Kidney (tissue), 22 donors: ENCODE measurements at regions of chr11 and their contacts with region 1.

Region 1: DNA sequence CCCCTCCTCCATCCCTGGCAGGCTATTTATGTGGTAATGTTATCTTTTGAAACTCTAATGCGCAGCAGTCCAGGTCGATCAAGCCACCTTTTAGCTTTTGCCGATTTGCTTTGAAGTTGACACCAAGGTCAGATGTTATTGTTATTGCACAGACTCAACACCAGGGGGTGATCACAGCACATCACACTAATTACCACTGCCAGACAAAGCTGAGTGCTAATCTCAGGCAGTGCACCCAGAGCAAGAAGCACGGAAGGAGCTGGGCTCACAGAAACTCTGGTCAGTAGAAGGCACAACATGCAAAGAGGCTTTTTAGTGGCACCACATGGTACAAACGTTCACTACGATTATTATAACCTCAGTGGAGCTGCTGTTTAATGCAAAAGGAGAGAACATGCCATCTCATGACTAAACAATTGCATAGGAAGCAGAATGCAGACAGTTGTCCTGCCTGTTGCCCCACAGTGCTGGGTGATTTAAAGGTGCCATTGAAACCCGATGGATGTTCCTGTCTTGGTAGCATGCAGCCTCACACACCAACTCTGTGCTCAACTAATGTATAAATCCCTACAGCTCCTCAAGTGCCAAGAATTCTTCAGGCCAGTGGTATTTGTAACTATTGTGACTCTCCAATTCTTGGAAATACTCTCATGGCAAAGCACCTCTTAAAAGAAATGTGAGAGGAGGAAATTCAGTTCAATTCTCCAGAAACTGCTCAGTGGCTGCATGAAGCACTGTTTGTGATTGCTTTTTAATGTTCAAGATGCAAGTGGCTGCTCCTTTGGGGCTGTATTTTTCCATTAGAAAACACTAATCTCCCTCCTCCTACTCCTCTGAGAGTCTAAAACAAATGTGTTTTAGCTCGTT is 353.9 kb upstream of the DDI1 start:
- DNase-seq: peak in 4 of 5 donors; percentile 77 to 86 (median 83)
- H3K4me3 ChIP-seq: peak overlapping the region in 1 of 3 donors; percentile 32
- H3K27ac ChIP-seq: no peak overlapping the region
- H3K4me1 ChIP-seq: peaks cover 0 to 4% (median 0%) of the 10 kb centered on the region in 3 donors
- H3K27me3 ChIP-seq: no peaks in the 10 kb centered on the region
- CTCF ChIP-seq: peak; percentile 77

Region 2: GRCh38 chr11:104151404-104152204 is 469.1 kb after region 1 on chr11:
- intact Hi-C with region 1: loop called (anchors 10 kb)
- DNase-seq: peak in 1 of 5 donors; percentile 12
- H3K4me3 ChIP-seq: no peak overlapping the region
- H3K27ac ChIP-seq: no peak overlapping the region
- H3K4me1 ChIP-seq: no peaks in the 10 kb centered on the region
- H3K27me3 ChIP-seq: no peaks in the 10 kb centered on the region
- CTCF ChIP-seq: peak; percentile 31